ENCODE measurements at regions of chr3 and their contacts with region 1.

Region 1: GRCh38 chr3:157081681-157082210 is 78.2 kb downstream of the CCNL1 start:
- DNase-seq: peak; percentile 94
- ATAC-seq: peak; percentile 97
- H3K4me3 ChIP-seq: no peak overlapping the region
- H3K27ac ChIP-seq: no peak overlapping the region
- H3K4me1 ChIP-seq: peaks cover 15% of the 10 kb centered on the region
- H3K27me3 ChIP-seq: no peaks in the 10 kb centered on the region
- CTCF ChIP-seq: peak; percentile 96
- POLR2A ChIP-seq: peak; percentile 82
- RAD21 ChIP-seq: peak; percentile 98

Region 2: GRCh38 chr3:156547637-156548036 is 534.1 kb before region 1 on chr3:
- CTCF ChIA-PET with region 1: no interaction called
- POLR2A ChIA-PET with region 1: no interaction called
- dilution Hi-C with region 1: no loop called
- in situ Hi-C with region 1: loop called (anchors 5 kb)
- intact Hi-C with region 1: no loop called
- DNase-seq: peak; percentile 56
- ATAC-seq: no peak
- H3K4me3 ChIP-seq: no peak overlapping the region
- H3K27ac ChIP-seq: peak overlapping the region; percentile 49; the same call in 1 of the 2 replicates
- H3K4me1 ChIP-seq: peaks cover 14% of the 10 kb centered on the region
- H3K27me3 ChIP-seq: no peaks in the 10 kb centered on the region
- CTCF ChIP-seq: no peak
- POLR2A ChIP-seq: no peak
- RAD21 ChIP-seq: no peak

Region 3: GRCh38 chr3:156554842-156555687 is 526.7 kb before region 1 on chr3 and contains the start of gene SSR3:
- CTCF ChIA-PET with region 1: no interaction called
- POLR2A ChIA-PET with region 1: no interaction called
- dilution Hi-C with region 1: no loop called
- in situ Hi-C with region 1: no loop called
- intact Hi-C with region 1: loop called (anchors 1 kb)
- DNase-seq: peak; percentile 100
- ATAC-seq: peak; percentile 97
- H3K4me3 ChIP-seq: peak within 1 kb of the TSS; percentile 76
- H3K27ac ChIP-seq: peak within 1 kb of the TSS; percentile 100
- H3K4me1 ChIP-seq: peaks cover 9% of the 10 kb centered on the region
- H3K27me3 ChIP-seq: no peaks in the 10 kb centered on the region
- CTCF ChIP-seq: no peak
- POLR2A ChIP-seq: peak; percentile 97
- RAD21 ChIP-seq: 0 out of 2 replicates have a peak, but pooled peaks have one; percentile 5
- total RNA-seq, gene SSR3: 606 and 608 TPM in 2 replicates

Region 4: DNA sequence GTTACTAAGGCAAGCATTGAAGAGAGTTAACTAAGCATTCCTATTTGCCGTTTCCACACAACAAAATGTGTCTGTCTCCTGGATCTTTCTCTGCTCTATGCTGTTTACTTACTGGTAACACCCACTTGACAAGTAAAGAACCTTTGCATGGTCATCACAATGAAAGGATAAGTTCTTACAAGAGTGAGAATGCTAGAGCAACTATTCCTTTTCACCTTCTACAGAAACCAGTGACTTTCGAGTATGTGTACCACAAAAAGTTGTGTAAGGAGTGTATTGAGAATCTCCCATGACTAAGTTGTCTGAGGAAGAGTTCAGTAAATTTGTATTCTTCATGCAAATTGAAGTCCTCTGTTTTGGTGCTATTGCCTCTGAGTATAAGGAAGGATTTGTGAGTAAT is 396.5 kb before region 1 on chr3:
- CTCF ChIA-PET with region 1: interaction called, 5 read pairs
- POLR2A ChIA-PET with region 1: no interaction called
- dilution Hi-C with region 1: no loop called
- in situ Hi-C with region 1: loop called (anchors 5 kb)
- intact Hi-C with region 1: no loop called
- DNase-seq: peak; percentile 53
- ATAC-seq: peak; percentile 28
- H3K4me3 ChIP-seq: no peak overlapping the region
- H3K27ac ChIP-seq: peak overlapping the region; percentile 19; the same call in 1 of the 2 replicates
- H3K4me1 ChIP-seq: peaks cover 29% of the 10 kb centered on the region
- H3K27me3 ChIP-seq: no peaks in the 10 kb centered on the region
- CTCF ChIP-seq: no peak
- POLR2A ChIP-seq: no peak; the same call in 1 of the 2 replicates
- RAD21 ChIP-seq: no peak

Region 5: GRCh38 chr3:156985711-156986110 is 96.0 kb before region 1 on chr3:
- CTCF ChIA-PET with region 1: no interaction called
- POLR2A ChIA-PET with region 1: no interaction called
- dilution Hi-C with region 1: no loop called
- in situ Hi-C with region 1: no loop called
- intact Hi-C with region 1: no loop called
- DNase-seq: no peak
- ATAC-seq: no peak
- H3K4me3 ChIP-seq: no peak overlapping the region
- H3K27ac ChIP-seq: no peak overlapping the region
- H3K4me1 ChIP-seq: no peaks in the 10 kb centered on the region
- H3K27me3 ChIP-seq: no peaks in the 10 kb centered on the region; the same call in 1 of the 2 replicates
- CTCF ChIP-seq: no peak
- POLR2A ChIP-seq: no peak
- RAD21 ChIP-seq: no peak

Measured in IMR-90 (cell line).